ENCODE measurements at regions of chr9 and their contacts with region 1.

Region 1: DNA sequence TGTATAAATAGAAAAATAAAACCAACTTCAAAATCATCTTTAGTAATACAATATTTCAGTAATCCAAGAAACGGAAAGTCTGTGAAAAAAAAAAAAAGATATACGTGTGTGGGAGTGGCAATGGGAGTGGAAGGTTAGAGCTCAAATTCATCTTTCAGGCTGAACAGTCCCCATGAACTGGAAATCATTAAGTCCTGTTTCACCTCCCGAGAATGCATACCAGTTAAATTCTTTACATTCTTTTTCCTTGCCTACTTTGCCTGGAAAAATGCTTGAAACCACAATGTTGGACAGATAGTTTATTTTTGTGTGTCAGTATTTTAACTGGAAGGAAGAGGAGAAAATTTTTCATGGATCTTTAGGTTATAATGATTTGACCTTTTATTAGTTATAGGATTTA is 166.8 kb downstream of the MUSK start:
- DNase-seq: peak; percentile 9
- H3K4me3 ChIP-seq: no peak overlapping the region
- H3K27ac ChIP-seq: no peak overlapping the region
- H3K4me1 ChIP-seq: peaks cover 26% of the 10 kb centered on the region
- H3K27me3 ChIP-seq: no peaks in the 10 kb centered on the region
- CTCF ChIP-seq: no peak

Region 2: GRCh38 chr9:110777196-110777875 is 58.1 kb before region 1 on chr9:
- CTCF ChIA-PET with region 1: no interaction called
- dilution Hi-C with region 1: loop called (anchors 5 kb)
- in situ Hi-C with region 1: no loop called
- intact Hi-C with region 1: no loop called
- DNase-seq: no peak
- H3K4me3 ChIP-seq: no peak overlapping the region
- H3K27ac ChIP-seq: no peak overlapping the region
- H3K4me1 ChIP-seq: no peaks in the 10 kb centered on the region
- H3K27me3 ChIP-seq: no peaks in the 10 kb centered on the region
- CTCF ChIP-seq: no peak

Region 3: GRCh38 chr9:111108946-111109345 is 273.5 kb after region 1 on chr9:
- CTCF ChIA-PET with region 1: no interaction called
- dilution Hi-C with region 1: loop called (anchors 10 kb)
- in situ Hi-C with region 1: no loop called
- intact Hi-C with region 1: no loop called
- DNase-seq: peak; percentile 44
- H3K4me3 ChIP-seq: no peak overlapping the region
- H3K27ac ChIP-seq: no peak overlapping the region
- H3K4me1 ChIP-seq: no peaks in the 10 kb centered on the region
- H3K27me3 ChIP-seq: no peaks in the 10 kb centered on the region
- CTCF ChIP-seq: no peak